Esophagus muscularis mucosa (tissue), 4 donors: ENCODE measurements at regions of chr13 and their contacts with region 1.

Region 1: GRCh38 chr13:41352935-41353840 is 42.1 kb downstream of the NAA16 start:
- DNase-seq: no peak
- H3K4me3 ChIP-seq: no peak overlapping the region
- H3K27ac ChIP-seq: no peak overlapping the region
- H3K4me1 ChIP-seq: no peaks in the 10 kb centered on the region
- H3K27me3 ChIP-seq: no peaks in the 10 kb centered on the region
- CTCF ChIP-seq: peak; percentile 80 to 83 (median 82)
- EP300 ChIP-seq: no peak
- POLR2A ChIP-seq: no peak

Region 2: DNA sequence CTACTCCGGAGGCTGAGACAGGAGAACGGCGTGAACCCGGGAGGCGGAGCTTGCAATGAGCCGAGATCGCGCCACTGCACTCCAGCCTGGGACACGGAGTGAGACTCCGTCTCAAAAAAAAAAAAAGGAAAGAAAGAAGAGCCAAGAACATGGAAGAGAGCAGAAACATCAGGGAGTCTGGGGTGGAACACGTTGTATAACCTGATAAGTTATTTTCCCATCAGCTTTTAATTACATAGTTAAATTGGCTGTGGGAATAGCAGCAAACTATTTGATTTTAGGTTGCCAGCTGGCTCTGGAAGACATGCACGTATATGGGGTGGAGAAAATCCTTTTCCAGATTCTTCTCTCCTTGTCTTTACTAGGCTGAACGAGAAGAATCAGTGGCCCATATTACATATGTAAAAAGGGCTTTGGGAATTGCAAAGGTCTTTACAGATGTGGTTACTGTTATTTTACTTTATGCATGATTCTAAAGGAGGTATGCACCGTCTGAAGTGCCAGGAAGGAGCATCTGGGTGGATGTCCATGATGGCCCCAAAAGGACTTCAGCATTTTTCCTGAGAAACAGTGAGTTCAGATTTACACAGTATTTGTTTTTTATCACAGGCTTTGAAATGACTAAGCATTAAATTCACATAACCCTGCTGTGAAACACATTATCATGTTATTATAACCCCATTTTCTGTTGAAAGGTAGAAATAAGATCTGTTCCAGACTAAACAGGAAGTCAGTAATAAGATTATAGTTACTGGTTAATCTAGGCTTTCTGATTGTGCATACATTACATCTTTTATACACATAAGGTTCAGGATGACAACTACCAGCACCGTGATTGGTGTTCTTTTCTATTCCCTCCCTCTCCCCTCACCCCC is 46.7 kb before region 1 on chr13:
- intact Hi-C with region 1: no loop called
- DNase-seq: no peak
- H3K4me3 ChIP-seq: no peak overlapping the region
- H3K27ac ChIP-seq: no peak overlapping the region
- H3K4me1 ChIP-seq: peaks cover 0 to 6% (median 2%) of the 10 kb centered on the region in 4 donors
- H3K27me3 ChIP-seq: no peaks in the 10 kb centered on the region
- CTCF ChIP-seq: no peak
- EP300 ChIP-seq: no peak
- POLR2A ChIP-seq: no peak

Region 3: DNA sequence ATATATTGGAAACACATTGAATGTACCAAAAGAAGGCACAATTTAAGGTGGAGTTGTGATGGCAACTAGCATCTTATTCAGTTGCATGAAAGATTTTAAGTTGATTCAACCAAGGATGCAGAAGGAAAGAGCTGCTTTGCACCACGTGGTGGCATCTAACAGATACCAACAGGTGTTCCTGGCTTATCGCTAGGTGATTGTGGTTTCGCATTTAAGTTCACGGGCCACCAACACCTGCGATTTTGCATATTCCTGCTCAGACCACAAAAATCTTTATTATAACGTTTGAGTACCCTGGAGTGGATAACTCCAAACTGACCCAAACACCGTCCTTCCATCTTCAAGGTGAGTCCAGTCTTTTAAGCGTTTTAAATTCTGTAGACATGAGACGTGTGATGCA is 149.5 kb after region 1 on chr13:
- intact Hi-C with region 1: no loop called
- DNase-seq: peak; percentile 37
- H3K4me3 ChIP-seq: no peak overlapping the region
- H3K27ac ChIP-seq: no peak overlapping the region
- H3K4me1 ChIP-seq: peaks cover 0 to 3% (median 0%) of the 10 kb centered on the region in 4 donors
- H3K27me3 ChIP-seq: no peaks in the 10 kb centered on the region
- CTCF ChIP-seq: no peak
- EP300 ChIP-seq: no peak
- POLR2A ChIP-seq: no peak

Region 4: GRCh38 chr13:41652727-41653361 is 299.7 kb after region 1 on chr13:
- intact Hi-C with region 1: loop called (anchors 5 kb)
- DNase-seq: no peak
- H3K4me3 ChIP-seq: no peak overlapping the region
- H3K27ac ChIP-seq: peak overlapping the region; percentile 14 to 47 (median 35)
- H3K4me1 ChIP-seq: peaks cover 17 to 34% (median 28%) of the 10 kb centered on the region in 4 donors
- H3K27me3 ChIP-seq: no peaks in the 10 kb centered on the region
- CTCF ChIP-seq: peak; percentile 62 to 65 (median 63)
- EP300 ChIP-seq: no peak
- POLR2A ChIP-seq: no peak

Region 5: DNA sequence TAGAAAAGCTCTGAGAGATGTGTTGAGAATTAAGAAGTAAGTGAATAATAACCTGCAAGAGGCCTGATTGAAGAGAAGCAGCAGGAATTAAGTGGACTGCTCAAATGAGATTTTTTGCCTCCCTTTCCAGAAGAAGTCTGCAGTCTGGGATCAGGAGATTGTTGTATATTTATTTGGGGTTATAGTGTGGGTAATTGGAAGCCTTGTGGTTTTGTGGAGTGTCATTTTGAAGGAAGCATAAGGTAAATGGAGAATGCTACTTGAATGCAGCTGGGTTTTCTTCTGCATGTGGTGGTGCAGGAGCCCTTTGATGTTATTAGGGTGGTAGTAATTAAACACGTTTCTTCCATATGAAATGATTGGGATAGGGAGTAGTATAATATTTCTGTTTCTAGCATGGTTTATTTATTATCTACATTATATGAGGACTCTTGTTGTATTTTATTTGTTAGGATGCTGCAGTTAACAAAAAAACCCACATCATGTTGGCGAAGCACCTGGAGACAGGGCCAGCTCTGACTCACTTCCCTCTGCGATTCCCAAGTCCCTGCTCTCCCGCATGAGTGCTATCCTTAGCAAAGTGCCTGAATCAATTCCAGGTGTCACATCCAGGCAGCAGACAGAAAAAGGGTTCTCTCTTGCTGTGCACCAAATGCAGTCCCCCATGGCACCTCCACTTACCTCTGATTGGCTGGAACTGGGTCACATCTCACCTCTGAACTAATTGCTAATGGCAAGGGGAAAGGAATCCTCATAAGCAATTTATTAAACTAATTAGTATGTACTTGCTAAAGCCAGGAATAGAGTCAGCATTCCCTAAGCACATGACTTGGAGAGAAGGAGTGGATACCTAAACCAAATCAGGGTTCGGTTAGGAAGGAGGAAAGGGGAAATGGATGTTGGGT is 750.0 kb after region 1 on chr13:
- intact Hi-C with region 1: loop called (anchors 10 kb)
- DNase-seq: no peak
- H3K4me3 ChIP-seq: no peak overlapping the region
- H3K27ac ChIP-seq: no peak overlapping the region
- H3K4me1 ChIP-seq: peaks cover 4 to 18% (median 9%) of the 10 kb centered on the region in 4 donors
- H3K27me3 ChIP-seq: no peaks in the 10 kb centered on the region
- CTCF ChIP-seq: no peak
- EP300 ChIP-seq: no peak
- POLR2A ChIP-seq: no peak